MCF 10A (cell line): ENCODE measurements at regions of chrX and their contacts with region 1.

Region 1: DNA sequence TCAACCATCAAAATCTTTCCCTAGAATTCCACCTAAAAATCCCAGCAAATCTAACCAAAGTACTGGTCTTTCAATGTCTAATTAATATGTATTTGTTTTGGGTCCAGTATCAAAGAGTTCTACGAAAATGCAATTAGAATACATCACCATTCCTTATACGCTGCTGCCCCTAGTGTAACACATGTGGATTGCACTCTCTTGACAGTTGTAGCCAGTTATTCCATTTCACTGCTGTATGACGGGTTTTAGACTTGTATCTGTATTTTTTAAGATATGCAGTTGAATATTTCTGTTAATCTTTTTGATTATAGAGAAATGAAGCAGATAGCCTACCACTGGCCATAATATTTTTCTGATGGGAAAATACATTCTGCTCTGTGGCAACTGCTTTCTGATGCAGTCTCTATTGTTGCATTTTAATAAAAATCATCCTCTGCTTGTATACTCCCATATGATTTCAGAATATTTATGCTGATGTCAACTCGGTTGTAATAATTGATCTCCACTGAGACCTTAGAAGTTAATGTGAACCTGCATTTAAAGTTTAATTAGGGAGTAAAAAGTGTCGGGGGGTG is 17.1 kb upstream of the PAGE2B start:
- DNase-seq: peak; percentile 50
- H3K4me3 Mint-ChIP-seq: no peak overlapping the region
- H3K27ac Mint-ChIP-seq: no peak overlapping the region
- H3K4me1 Mint-ChIP-seq: no peaks in the 10 kb centered on the region
- H3K27me3 Mint-ChIP-seq: peaks cover 70% of the 10 kb centered on the region
- CTCF ChIP-seq: peak; percentile 84

Region 2: GRCh38 chrX:54248309-54248708 is 809.5 kb before region 1 on chrX:
- CTCF ChIA-PET with region 1: interaction called, 4 read pairs
- POLR2A ChIA-PET with region 1: no interaction called
- intact Hi-C with region 1: loop called (anchors 1 kb)
- DNase-seq: peak; percentile 35
- H3K4me3 Mint-ChIP-seq: no peak overlapping the region
- H3K27ac Mint-ChIP-seq: no peak overlapping the region
- H3K4me1 Mint-ChIP-seq: no peaks in the 10 kb centered on the region
- H3K27me3 Mint-ChIP-seq: peaks cover 80% of the 10 kb centered on the region
- CTCF ChIP-seq: peak; percentile 40

Region 3: DNA sequence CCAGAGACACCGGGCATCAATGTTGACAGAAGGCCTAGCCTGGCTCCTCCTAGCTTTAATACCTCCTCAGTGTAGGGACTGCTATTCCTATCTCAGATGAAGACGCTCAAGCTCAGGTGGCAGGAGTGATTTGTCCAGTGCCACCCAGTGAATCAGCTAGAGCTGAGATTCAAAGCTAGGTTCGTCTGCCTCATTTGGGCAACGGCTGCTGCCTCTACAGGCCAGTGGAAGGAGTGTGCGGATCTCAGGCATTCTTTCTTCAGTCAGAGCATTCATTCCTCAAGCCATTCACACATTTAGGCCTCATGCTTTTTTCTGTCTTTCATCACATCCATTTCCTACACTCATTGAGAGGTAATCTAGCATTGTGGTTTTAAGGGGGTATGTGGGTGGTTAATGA is 610.3 kb before region 1 on chrX:
- CTCF ChIA-PET with region 1: no interaction called
- POLR2A ChIA-PET with region 1: no interaction called
- intact Hi-C with region 1: loop called (anchors 5 kb)
- DNase-seq: peak; percentile 3
- H3K4me3 Mint-ChIP-seq: no peak overlapping the region
- H3K27ac Mint-ChIP-seq: no peak overlapping the region
- H3K4me1 Mint-ChIP-seq: no peaks in the 10 kb centered on the region
- H3K27me3 Mint-ChIP-seq: peaks cover 43% of the 10 kb centered on the region
- CTCF ChIP-seq: no peak

Region 4: DNA sequence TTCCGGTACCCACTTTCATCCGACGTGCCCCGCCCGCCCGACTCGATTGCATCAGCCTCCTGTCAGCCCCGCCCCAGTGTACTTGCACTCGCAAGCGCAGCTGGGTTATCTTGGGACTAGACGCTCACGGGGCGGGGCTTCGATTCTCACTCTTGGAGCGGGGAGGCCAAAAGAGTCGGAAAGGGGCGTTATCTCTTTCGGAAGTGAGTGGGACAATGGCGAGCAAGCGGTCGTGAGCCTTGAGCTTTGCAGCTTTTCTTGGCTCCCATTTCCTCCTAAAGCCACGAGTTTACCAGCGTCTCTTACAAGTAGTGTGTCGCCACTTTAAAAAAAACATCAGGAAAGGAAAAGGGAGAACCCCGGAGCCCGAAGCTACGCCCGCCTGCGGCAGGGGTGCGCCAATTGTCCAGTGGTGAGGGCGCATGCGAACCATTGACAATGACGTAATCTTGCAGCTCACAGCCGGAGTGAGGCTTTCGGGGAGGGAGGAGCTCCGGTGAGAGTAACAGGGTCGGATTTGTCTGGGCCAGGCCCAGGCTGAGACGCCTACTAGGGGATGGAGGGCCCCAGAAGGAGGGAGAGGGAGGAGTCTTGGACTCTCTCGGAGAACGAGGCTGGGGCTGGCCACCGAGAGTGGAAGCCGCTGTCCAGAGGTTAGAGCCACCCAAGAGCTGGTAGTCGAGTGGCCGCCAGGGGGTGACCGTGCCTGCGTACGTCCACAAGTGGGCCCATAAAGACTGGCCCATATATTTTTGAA is 418.2 kb before region 1 on chrX:
- CTCF ChIA-PET with region 1: interaction called, 8 read pairs
- POLR2A ChIA-PET with region 1: no interaction called
- intact Hi-C with region 1: loop called (anchors 10 kb)
- DNase-seq: peak; percentile 94
- H3K4me3 Mint-ChIP-seq: peak overlapping the region; percentile 78
- H3K27ac Mint-ChIP-seq: peak overlapping the region; percentile 96
- H3K4me1 Mint-ChIP-seq: peaks cover 6% of the 10 kb centered on the region
- H3K27me3 Mint-ChIP-seq: no peaks in the 10 kb centered on the region
- CTCF ChIP-seq: peak; percentile 45

Region 5: DNA sequence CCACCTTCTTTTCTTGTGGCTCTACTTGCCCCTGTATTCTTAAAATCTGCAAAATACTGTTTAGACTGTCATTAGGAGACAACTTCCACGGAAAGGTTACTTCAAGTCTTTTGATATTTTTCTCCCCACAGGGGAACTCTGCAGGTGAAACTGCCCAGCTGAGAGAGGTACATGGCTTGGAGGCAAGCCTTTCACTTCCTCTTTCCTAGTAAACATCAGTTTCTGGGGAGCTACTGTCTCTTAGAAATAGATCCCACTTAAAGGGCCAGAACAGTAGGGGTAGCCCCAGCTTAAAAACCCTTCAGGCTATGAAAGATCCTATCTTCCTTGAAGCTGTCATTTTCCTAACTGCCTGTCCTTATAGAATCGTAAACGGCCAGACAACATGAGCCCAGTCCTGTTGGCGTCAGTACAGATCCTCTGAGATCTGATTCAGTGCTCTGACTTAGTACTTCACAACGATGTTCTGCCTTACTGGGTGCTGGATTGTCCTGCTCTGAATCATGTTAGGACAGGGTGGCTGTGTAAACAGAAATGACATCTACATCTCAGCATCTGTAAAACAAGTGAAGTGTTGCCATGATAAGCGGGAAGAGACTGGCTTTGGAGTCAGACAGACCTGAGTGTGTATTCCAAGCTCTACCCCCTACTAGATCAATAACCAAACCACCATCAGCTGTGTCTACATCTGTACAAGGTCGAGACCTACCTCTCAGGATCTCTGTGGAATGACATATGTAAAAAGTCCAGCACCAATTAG is 361.8 kb before region 1 on chrX:
- CTCF ChIA-PET with region 1: no interaction called
- POLR2A ChIA-PET with region 1: no interaction called
- intact Hi-C with region 1: loop called (anchors 1 kb)
- DNase-seq: no peak
- H3K4me3 Mint-ChIP-seq: no peak overlapping the region
- H3K27ac Mint-ChIP-seq: no peak overlapping the region
- H3K4me1 Mint-ChIP-seq: no peaks in the 10 kb centered on the region
- H3K27me3 Mint-ChIP-seq: peaks cover 17% of the 10 kb centered on the region
- CTCF ChIP-seq: no peak